ENCODE measurements at regions of chr6 and their contacts with region 1.

Region 1: DNA sequence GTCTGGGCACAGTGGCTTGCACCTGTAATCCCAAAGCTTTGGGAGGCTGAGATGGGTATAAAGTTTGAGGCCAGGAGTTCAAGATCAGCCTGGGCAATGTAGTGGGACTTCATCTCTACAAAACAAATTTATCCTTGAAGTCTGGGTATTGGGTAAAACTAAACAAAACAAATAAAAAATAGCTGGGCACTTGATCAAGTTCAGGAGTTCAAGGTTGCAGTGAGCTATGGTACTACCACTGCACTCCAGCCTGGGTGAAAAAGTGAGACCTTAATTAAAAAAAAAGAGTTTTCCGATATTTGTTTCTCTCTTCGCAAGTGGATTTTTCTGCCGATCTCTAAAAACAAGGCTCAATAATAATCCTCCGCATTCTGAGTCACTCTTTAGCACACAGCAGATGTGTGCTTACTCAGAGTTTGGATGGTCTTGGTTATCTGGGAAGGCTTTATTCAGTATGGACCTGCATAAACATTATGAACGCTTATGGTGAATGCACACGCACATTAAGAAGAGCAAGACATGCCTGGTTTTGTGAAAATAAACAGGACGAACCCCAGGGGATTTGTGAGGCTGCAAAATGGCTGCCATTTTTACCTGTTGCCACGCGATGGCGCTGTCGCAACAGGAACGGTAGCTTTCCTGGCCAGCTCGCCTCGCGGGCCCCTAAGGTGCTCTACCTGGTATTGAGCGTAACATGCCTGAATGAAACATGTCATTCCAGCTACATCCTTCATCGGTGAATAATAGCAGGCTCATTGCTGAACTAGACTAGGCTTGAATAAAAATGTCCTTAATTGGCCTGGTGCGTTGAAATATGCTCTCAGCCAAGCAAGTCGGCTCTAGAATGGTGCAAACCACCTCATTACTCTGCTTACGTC is 6.0 kb downstream of the OPN5 start:
- DNase-seq: peak; percentile 29 to 72 (median 50)
- H3K4me3 ChIP-seq: peak overlapping the region in 52 of 59 donors; percentile 4 to 52 (median 36)
- H3K27ac ChIP-seq: peak overlapping the region in 1 of 59 donors; percentile 36
- H3K27me3 ChIP-seq: peaks cover 0 to 20% (median 0%) of the 10 kb centered on the region in 45 donors
- CTCF ChIP-seq: peak; percentile 82 to 98 (median 92)

Region 2: GRCh38 chr6:46815130-46815529 is 972.7 kb before region 1 on chr6:
- intact Hi-C with region 1: no loop called
- DNase-seq: no peak
- H3K4me3 ChIP-seq: no peak overlapping the region
- H3K27ac ChIP-seq: no peak overlapping the region
- H3K27me3 ChIP-seq: peaks cover 0 to 10% (median 0%) of the 10 kb centered on the region in 45 donors
- CTCF ChIP-seq: no peak

Region 3: GRCh38 chr6:48765352-48765961 is 977.6 kb after region 1 on chr6:
- intact Hi-C with region 1: loop called (anchors 5 to 10 kb)
- DNase-seq: peak in 4 of 10 donors; percentile 6 to 49 (median 42)
- H3K4me3 ChIP-seq: no peak overlapping the region
- H3K27ac ChIP-seq: peak overlapping the region in 2 of 59 donors; percentile 4 to 24
- H3K27me3 ChIP-seq: peaks cover 0 to 4% (median 0%) of the 10 kb centered on the region in 45 donors
- CTCF ChIP-seq: peak in 55 of 56 donors; percentile 41 to 78 (median 60)

Region 4: DNA sequence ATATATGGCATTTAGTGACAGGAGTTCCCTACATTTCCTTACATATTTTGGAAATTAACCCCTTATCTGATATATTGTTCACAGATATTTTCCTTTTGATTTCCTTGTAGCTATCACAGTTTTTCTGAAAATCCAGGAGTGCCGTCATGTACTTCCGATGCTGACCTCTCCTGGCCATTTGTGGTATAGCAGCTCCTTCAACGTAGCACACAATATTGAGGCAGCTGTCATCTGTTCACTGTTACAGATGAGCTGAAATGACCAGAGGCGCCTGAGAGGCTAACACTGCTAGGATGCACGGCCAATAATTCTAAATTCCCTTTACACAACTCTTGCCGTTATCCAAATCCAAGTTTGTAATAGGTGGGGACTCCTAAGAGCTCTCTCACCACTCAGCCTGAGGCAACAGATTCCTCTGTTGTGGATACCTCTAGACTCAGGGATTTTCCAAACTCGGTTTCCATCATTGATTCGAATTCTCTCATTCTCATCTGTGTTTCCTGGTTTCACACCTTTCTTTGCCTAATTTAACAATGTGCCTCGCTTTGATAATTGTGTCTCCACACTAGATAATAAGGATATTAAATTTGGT is 1622.2 kb after region 1 on chr6:
- intact Hi-C with region 1: loop called in 1 of 2 experiments (anchors 5 kb)
- DNase-seq: peak; percentile 33 to 91 (median 68)
- H3K4me3 ChIP-seq: no peak overlapping the region
- H3K27ac ChIP-seq: no peak overlapping the region
- H3K27me3 ChIP-seq: peaks cover 0 to 5% (median 0%) of the 10 kb centered on the region in 45 donors
- CTCF ChIP-seq: peak; percentile 68 to 94 (median 84)

Measured in dorsolateral prefrontal cortex (tissue), 120 donors.